GM10248 (cell line): ENCODE measurements at regions of chr1 and their contacts with region 1.

Region 1: DNA sequence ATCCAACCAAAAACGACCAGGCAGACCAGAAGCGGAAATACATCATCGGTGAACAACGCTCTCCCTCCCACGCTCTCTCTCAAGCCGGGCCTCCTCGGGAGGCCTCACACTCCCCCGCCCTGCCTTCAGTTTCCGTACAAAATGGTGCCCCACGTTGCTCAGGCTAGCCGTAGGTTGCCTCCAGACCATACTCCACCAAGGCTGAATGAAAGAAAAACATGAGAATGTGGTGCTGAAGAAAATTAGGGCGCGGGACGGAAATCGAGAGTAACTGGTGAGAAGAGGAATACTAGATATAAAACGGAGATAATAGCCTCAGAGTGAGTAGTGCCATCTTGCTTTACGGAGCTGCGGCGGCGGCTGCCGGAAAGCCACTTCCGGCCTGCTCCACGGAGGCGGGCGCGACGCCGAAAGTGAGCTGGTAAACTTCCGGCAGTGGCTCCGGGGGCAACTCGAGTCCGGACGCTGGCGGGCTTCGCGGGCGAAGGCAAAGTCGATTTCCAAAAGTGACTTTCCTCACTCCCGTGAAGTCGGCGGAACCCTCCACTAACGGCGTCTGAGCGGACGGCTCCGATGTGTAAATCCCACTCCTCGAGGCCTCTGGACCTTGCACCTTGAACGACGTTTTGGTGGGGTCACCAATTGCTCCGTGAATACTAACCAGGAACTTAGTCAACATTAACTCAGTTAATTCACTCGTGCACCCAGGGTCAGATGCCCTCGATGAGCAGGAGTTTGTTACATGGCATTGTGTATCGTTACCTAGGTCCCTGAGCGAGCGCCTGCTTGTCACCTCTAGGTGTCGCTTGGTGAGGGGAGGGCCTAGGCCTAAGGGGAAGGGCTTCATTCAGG is at the start of gene SH3BP5L:
- DNase-seq: peak; percentile 95
- CTCF ChIP-seq: peak; percentile 64

Region 2: DNA sequence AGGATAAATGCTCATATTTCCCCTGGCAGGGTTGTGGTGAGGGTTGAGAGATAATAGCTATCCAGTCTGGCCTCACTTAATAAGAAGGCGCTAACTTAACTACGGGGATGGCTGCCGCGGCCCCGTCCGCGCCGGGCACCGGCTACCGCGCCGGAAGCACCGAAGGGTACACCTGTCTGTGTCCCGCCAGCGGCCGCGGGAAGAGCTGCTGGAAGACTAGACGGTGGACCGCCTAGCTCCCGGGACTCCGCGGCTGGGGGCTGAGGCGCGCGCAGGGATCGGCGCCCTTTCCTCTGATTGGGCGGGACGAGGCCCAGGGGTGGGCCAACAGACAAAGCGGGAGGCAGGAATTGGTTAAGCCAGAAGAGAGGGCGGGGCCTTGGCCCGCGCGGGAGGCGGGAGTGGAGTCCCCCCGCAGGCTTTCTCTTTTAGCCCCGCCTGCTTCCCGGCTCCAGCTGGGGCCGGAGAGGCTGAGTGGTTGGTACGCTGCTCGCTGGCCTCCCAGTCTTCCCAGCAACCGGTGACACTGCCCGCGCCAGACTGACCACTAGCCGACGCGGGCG is 11.7 kb after region 1 on chr1 and contains the start of gene ZNF672:
- CTCF ChIA-PET with region 1: interaction called, 78 read pairs
- POLR2A ChIA-PET with region 1: interaction called, 19 read pairs
- DNase-seq: peak; percentile 96
- CTCF ChIP-seq: no peak